CD8-positive, alpha-beta memory T cell (primary cell): ENCODE measurements at regions of chr12 and their contacts with region 1.

Region 1: GRCh38 chr12:48903982-48904411 is 21.3 kb downstream of the FKBP11 start:
- DNase-seq: peak; percentile 70 to 89 (median 78)
- H3K4me3 ChIP-seq: peak overlapping the region; percentile 49
- H3K4me3 Mint-ChIP-seq: peak overlapping the region; percentile 28 to 83 (median 80)
- H3K27ac ChIP-seq: no peak overlapping the region
- H3K27ac Mint-ChIP-seq: peak overlapping the region; percentile 41 to 91 (median 82)
- H3K4me1 ChIP-seq: peaks cover 6% of the 10 kb centered on the region
- H3K4me1 Mint-ChIP-seq: peaks cover 3 to 14% (median 4%) of the 10 kb centered on the region in 3 donors
- H3K27me3 ChIP-seq: no peaks in the 10 kb centered on the region
- H3K27me3 Mint-ChIP-seq: no peaks in the 10 kb centered on the region

Region 2: GRCh38 chr12:48779869-48780268 is 124.1 kb before region 1 on chr12:
- CTCF ChIA-PET with region 1: no interaction called
- POLR2A ChIA-PET with region 1: no interaction called
- DNase-seq: no peak
- H3K4me3 ChIP-seq: no peak overlapping the region
- H3K4me3 Mint-ChIP-seq: no peak overlapping the region
- H3K27ac ChIP-seq: no peak overlapping the region
- H3K27ac Mint-ChIP-seq: no peak overlapping the region
- H3K4me1 ChIP-seq: no peaks in the 10 kb centered on the region
- H3K4me1 Mint-ChIP-seq: no peaks in the 10 kb centered on the region
- H3K27me3 ChIP-seq: no peaks in the 10 kb centered on the region
- H3K27me3 Mint-ChIP-seq: peaks cover 3 to 21% of the 10 kb centered on the region in 2 donors

Region 3: DNA sequence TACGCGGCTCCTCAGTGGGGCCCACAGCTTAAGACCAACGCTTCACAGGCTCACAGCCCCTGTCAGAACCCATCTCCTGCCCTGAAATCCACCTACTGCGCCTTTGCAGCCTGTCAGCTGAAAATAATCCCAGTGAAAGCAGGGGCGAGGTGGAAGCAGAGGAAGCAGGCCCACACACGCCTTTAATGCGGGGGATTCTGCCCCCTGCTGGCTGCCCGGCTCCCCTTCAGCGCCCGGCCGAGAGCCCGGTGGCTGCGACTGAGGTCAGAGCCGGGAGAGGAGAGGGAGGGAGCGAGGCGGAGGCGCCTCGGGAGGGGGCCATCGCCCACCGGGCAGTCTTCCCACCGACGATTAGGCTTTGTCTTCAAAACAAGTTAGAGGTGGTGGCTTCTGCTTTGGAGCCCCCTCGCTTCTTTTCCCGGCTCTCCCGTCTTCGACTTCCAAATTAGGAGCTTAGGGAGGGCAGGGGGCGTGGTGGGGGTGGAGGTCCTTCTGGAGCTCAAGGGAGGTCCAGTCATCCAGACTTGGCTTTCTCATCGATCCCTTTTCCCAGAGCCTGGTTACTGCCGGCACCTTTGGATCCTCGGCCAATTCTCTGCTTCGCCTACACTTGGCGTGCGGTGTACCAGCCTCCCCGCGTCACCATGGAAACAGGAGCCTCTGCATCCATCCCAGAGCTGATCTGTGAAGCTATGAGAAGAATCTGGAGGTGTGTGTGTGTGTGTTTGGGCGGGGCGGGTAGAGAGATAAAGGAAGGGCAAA is 13.2 kb before region 1 on chr12:
- CTCF ChIA-PET with region 1: interaction called, 31 read pairs
- POLR2A ChIA-PET with region 1: no interaction called
- DNase-seq: peak; percentile 57 to 79 (median 64)
- H3K4me3 ChIP-seq: no peak overlapping the region
- H3K4me3 Mint-ChIP-seq: peak overlapping the region in 3 of 7 donors; percentile 18 to 42 (median 39)
- H3K27ac ChIP-seq: no peak overlapping the region
- H3K27ac Mint-ChIP-seq: peak overlapping the region in 2 of 8 donors; percentile 11 to 61
- H3K4me1 ChIP-seq: no peaks in the 10 kb centered on the region
- H3K4me1 Mint-ChIP-seq: peaks cover 6 to 10% (median 8%) of the 10 kb centered on the region in 3 donors
- H3K27me3 ChIP-seq: peaks cover 10% of the 10 kb centered on the region
- H3K27me3 Mint-ChIP-seq: peaks cover 9 to 19% of the 10 kb centered on the region in 2 donors

Region 4: DNA sequence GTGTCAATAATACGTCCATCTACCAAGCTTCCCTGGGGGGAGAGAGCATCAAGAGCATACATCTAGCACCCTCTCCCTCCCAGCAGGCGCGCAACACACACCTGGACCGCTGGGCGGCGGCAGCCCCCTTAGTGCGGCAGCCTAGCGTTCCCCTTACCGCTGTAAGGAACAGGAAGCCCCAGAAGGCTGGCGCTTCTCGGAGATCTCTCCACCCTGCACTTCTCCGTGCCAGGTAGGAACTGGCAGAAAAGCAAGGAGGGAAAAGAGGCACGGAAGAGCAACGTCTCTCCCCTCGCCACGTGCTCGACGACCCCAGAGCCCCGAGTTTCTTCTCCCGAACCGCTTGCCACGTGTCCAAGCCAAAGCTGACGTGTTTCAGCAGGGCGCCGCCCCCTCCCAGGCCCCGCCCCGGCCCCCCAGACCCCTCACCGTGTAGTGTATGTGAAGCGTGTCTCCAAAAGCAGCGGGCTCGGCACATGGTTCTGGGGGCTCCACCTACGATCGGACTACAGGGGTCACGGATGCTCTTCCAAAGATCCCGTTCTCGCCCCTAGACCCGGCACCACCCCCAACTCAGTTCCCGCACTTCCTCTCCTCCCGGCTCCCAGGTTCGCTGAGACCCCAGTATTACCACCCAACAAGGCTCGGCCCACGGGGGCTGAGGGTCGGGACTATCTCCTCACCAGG is 20.8 kb after region 1 on chr12:
- CTCF ChIA-PET with region 1: interaction called, 67 read pairs
- POLR2A ChIA-PET with region 1: interaction called, 3 read pairs
- DNase-seq: peak; percentile 63 to 86 (median 81)
- H3K4me3 ChIP-seq: peak overlapping the region; percentile 96
- H3K4me3 Mint-ChIP-seq: peak overlapping the region; percentile 88 to 98 (median 96)
- H3K27ac ChIP-seq: peak overlapping the region; percentile 90
- H3K27ac Mint-ChIP-seq: peak overlapping the region; percentile 91 to 100 (median 98)
- H3K4me1 ChIP-seq: peaks cover 12% of the 10 kb centered on the region
- H3K4me1 Mint-ChIP-seq: peaks cover 53 to 64% (median 62%) of the 10 kb centered on the region in 3 donors
- H3K27me3 ChIP-seq: no peaks in the 10 kb centered on the region
- H3K27me3 Mint-ChIP-seq: no peaks in the 10 kb centered on the region

Region 5: DNA sequence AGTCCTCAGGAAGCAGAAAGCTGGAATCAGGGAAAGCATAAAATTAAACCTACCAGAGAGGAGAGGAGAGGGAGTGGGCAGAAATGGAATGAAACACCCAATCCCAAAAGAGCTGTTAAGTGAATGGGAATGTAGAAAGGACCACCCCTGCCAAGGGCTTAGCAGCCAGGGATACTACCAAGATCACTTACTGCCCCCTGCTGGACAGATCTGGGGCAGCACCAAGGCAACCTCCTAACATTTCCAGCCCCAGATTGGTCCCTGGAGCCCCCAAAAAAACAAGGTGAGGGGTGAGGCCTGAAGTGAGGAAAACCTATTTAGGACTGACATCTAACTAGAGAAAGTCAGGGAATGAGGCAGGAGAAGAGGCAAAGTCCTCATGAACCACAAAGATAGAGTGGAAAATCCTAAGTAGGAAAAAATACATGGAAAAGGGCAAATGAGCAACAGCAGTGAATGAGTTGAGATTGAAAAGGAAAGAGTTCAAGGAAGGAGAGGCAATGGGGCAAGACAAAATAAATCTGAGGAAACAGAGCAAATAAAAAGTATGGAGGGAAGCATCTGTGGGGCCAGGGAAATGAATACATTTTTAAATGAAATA is 32.5 kb after region 1 on chr12:
- CTCF ChIA-PET with region 1: interaction called, 68 read pairs
- POLR2A ChIA-PET with region 1: interaction called, 4 read pairs
- DNase-seq: peak; percentile 75 to 88 (median 82)
- H3K4me3 ChIP-seq: no peak overlapping the region
- H3K4me3 Mint-ChIP-seq: no peak overlapping the region
- H3K27ac ChIP-seq: no peak overlapping the region
- H3K27ac Mint-ChIP-seq: peak overlapping the region; percentile 38 to 98 (median 96)
- H3K4me1 ChIP-seq: peaks cover 33% of the 10 kb centered on the region
- H3K4me1 Mint-ChIP-seq: peaks cover 36 to 49% (median 42%) of the 10 kb centered on the region in 3 donors
- H3K27me3 ChIP-seq: no peaks in the 10 kb centered on the region
- H3K27me3 Mint-ChIP-seq: no peaks in the 10 kb centered on the region

Region 6: DNA sequence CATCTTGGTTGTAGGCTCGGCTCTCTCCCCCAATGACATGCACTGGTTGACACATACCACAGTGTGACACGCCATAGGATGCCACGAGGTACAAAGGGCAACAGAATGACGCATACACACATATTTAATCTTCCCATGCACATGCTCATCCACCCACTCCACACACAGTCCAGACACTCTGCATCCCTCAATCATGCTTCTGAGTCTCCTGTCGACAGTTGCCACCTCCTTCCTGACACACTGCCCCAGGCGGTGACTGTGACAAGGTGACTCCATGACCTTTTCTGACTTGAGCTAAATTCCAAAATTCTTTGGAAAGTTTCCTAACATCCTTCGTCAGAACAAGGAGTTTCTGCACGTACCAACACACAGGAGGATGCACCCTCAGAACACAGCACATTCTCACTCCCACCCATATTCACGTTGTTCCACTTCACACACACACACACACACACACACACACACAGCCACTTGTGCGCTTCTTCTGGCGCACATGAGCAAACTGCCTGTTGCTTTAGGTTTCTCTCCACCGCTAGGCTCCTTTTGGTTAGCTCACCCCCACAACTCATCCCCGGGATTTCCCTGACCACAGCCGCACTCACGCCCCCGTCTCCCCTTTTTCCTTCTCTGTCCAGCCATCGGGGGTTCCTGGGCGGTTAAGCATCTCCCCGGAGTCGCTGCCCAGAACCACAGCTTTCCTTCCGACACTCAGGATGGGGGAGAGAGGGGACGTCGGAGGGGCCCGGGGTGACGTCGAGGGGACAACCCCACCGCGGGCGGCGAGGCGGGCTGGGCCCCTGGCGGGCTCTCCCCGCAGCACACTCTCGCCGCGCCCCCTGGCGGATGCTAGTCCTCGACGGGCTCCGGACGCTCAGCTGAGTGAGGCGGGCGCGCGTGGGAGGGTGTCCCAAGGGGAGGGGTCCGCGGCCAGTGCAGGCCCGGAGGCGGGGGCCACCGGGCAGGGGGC is 73.6 kb after region 1 on chr12:
- CTCF ChIA-PET with region 1: interaction called, 17 read pairs
- POLR2A ChIA-PET with region 1: interaction called, 4 read pairs
- DNase-seq: peak; percentile 77 to 87 (median 80)
- H3K4me3 ChIP-seq: peak overlapping the region; percentile 89
- H3K4me3 Mint-ChIP-seq: peak overlapping the region; percentile 63 to 73 (median 71)
- H3K27ac ChIP-seq: no peak overlapping the region
- H3K27ac Mint-ChIP-seq: peak overlapping the region in 7 of 8 donors; percentile 36 to 93 (median 87)
- H3K4me1 ChIP-seq: peaks cover 49% of the 10 kb centered on the region
- H3K4me1 Mint-ChIP-seq: peaks cover 43 to 58% (median 51%) of the 10 kb centered on the region in 3 donors
- H3K27me3 ChIP-seq: peaks cover 25% of the 10 kb centered on the region
- H3K27me3 Mint-ChIP-seq: peaks cover 12 to 22% of the 10 kb centered on the region in 2 donors